PC-9 (cell line): ENCODE measurements at regions of chr17 and their contacts with region 1.

Region 1: DNA sequence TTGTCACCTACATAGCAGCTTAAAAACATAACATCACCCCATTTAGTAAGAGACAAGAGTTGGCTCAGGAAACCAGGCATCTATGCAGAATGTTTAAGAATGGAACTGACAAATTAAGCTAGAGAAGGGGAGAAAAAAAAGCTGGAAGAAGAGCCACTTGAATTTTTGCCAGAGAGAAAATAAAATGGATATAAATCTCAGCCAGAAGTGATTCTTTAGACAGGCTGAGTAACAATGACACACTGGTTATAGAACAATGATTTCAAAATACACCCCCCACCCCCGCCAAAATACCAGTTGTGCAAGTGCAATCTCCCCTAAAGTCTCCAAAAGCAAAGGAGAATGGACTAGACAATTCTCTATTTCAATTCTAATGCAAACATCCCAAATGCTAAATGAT is 22.4 kb downstream of the LSM12 start:
- DNase-seq: no peak
- H3K4me3 ChIP-seq: no peak overlapping the region
- H3K27ac ChIP-seq: no peak overlapping the region
- H3K4me1 ChIP-seq: no peaks in the 10 kb centered on the region
- H3K27me3 ChIP-seq: no peaks in the 10 kb centered on the region
- CTCF ChIP-seq: no peak

Region 2: GRCh38 chr17:43878260-43879175 is 165.5 kb before region 1 on chr17:
- CTCF ChIA-PET with region 1: no interaction called
- POLR2A ChIA-PET with region 1: no interaction called
- intact Hi-C with region 1: loop called (anchors 1 kb)
- DNase-seq: peak; percentile 73 to 84
- H3K4me3 ChIP-seq: no peak overlapping the region
- H3K27ac ChIP-seq: no peak overlapping the region
- H3K4me1 ChIP-seq: no peaks in the 10 kb centered on the region
- H3K27me3 ChIP-seq: no peaks in the 10 kb centered on the region
- CTCF ChIP-seq: peak; percentile 92

Region 3: GRCh38 chr17:43966271-43966670 is 77.8 kb before region 1 on chr17:
- CTCF ChIA-PET with region 1: no interaction called
- POLR2A ChIA-PET with region 1: no interaction called
- intact Hi-C with region 1: no loop called
- DNase-seq: peak; percentile 16 to 45
- H3K4me3 ChIP-seq: no peak overlapping the region
- H3K27ac ChIP-seq: no peak overlapping the region
- H3K4me1 ChIP-seq: no peaks in the 10 kb centered on the region
- H3K27me3 ChIP-seq: peaks cover 11% of the 10 kb centered on the region; the same call in 1 of the 2 replicates
- CTCF ChIP-seq: no peak

Region 4: DNA sequence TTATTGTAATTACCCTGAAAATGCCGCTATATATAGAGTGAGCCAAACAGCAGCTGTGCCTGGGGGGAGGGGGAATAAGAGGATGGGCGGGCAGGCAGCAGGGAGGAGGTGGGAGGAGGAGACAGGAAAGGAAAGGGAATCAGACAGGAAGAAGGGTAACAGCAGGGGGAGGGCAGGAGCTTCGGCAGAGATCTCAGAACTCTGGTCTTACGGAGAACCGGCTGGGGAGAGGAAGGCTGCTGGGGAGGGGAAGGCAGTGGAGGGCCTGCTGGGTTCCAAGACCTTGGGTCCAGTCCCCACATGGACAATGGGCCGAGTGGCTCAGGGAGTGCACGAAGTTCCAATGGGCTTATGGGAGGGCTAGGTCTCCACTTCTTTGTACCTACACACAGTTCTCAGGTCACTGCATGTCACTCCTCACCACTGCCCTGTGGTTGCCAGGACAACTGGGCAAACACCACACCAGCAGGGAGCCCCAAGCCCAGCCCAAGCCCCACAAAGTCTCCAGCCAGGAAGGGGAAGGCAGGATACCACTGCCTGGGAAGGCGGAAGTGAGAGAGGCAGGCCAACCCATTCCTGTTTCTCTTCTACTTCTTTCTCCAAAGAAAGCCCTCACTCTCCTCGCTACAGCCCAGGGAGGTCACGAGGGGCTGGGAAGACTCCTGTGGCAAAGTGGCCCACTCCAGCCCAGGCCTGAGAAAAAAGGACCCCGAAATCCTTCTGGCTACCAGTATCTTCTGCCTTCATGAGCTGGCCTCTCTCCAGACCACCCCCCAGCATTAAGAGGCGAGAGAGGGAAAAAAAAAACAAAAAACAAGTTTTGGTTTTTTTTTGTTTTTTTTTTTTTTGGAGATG is 51.8 kb after region 1 on chr17:
- CTCF ChIA-PET with region 1: no interaction called
- POLR2A ChIA-PET with region 1: no interaction called
- intact Hi-C with region 1: no loop called
- DNase-seq: peak; percentile 88 to 91
- H3K4me3 ChIP-seq: peak overlapping the region; percentile 44; the same call in 1 of the 2 replicates
- H3K27ac ChIP-seq: peak overlapping the region; percentile 93
- H3K4me1 ChIP-seq: peaks cover 30% of the 10 kb centered on the region
- H3K27me3 ChIP-seq: no peaks in the 10 kb centered on the region
- CTCF ChIP-seq: no peak; the same call in 1 of the 2 replicates

Region 5: GRCh38 chr17:44123356-44124117 is 79.5 kb after region 1 on chr17 and contains the start of gene HDAC5:
- CTCF ChIA-PET with region 1: interaction called, 3 read pairs
- POLR2A ChIA-PET with region 1: interaction called, 22 read pairs
- intact Hi-C with region 1: no loop called
- DNase-seq: peak; percentile 75 to 91
- H3K4me3 ChIP-seq: peak within 1 kb of the TSS; percentile 84
- H3K27ac ChIP-seq: peak within 1 kb of the TSS; percentile 68
- H3K4me1 ChIP-seq: peaks cover 7% of the 10 kb centered on the region
- H3K27me3 ChIP-seq: peaks cover 4% of the 10 kb centered on the region; the same call in 1 of the 2 replicates
- CTCF ChIP-seq: peak; percentile 75
- total RNA-seq, gene HDAC5: 24.0 and 40.5 TPM in 2 replicates

Region 6: DNA sequence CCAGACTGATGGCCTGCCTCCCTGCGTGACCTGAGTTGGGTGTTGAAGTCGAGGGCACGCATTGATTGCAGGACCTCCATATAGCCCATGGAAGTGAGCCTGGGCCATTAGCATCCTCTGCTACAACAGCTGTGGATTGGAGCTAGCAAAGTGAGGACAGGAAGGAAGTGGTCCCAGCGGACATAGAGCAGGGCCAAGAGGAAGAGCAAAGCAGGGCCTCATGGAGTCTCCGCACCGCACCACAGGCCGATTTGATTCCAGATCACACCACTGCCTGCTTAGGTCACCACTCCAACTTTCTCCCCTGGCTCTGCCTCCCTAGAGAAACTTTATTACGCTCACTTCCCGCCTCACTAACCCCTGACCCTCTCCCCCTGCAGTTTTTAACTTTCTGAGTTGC is 186.1 kb after region 1 on chr17:
- CTCF ChIA-PET with region 1: no interaction called
- POLR2A ChIA-PET with region 1: no interaction called
- intact Hi-C with region 1: no loop called
- DNase-seq: no peak
- H3K4me3 ChIP-seq: no peak overlapping the region
- H3K27ac ChIP-seq: no peak overlapping the region
- H3K4me1 ChIP-seq: peaks cover 10% of the 10 kb centered on the region
- H3K27me3 ChIP-seq: no peaks in the 10 kb centered on the region
- CTCF ChIP-seq: no peak